Spleen (tissue), 13 donors: ENCODE measurements at regions of chr3 and their contacts with region 1.

Region 1: DNA sequence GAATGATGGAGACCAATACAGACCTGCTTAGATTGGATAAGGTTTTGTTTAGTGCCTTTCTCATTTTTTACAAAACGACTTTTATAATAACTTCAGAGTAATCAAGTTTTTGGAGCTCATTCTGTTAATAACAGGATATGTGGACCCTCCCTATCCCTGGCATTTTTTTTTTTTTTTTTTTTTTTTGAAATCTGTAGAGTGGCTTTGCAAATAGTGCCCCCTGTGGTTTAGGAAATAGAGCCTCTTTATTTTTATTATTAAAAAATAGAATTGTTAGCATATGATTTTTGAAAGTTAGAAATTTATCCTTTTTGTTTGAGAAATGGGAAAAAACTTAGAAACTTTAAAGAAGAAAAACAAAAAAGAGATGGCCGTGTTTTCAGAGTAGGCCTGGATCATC is 11.4 kb downstream of the SKIL start:
- DNase-seq: no peak
- H3K4me3 ChIP-seq: no peak overlapping the region
- H3K27ac ChIP-seq: no peak overlapping the region
- H3K4me1 ChIP-seq: peaks cover 0 to 88% (median 40%) of the 10 kb centered on the region in 6 donors
- H3K27me3 ChIP-seq: no peaks in the 10 kb centered on the region
- CTCF ChIP-seq: peak in 6 of 11 experiments; percentile 27 to 52 (median 32)
- POLR2A ChIP-seq: no peak

Region 2: DNA sequence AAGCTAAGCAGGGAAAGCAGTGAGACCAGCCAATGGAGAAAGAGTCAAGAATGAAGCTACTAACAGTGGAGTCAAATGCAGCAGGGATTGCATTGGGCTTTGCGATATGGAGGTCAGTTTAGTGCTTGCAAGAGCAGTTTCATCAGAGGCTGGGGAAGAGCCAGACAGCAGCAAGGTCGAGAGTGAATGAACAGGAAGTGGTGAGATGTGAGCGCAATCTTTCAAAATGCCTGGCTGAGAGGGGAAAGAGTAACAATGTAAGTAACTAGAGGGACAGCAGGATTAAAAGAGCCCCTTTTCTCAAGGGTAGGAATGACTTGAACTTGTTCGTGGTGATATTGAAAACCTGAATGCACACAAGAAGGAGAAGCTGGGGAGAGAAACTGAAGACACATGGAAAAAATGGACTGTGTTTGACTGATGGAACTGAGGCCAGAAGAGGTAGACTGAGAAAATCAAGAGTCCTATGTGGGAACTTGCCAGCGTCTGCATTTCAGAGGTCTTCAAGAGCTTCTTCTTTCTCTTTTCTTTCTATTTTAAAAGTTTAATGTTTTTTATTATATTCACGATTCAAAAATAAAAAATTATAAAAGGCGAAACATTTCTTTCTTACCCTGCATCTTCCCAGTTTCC is 361.8 kb before region 1 on chr3:
- intact Hi-C with region 1: no loop called
- DNase-seq: peak; percentile 80
- H3K4me3 ChIP-seq: peak overlapping the region in 1 of 8 donors; percentile 21
- H3K27ac ChIP-seq: peak overlapping the region in 7 of 8 donors; percentile 55 to 92 (median 71)
- H3K4me1 ChIP-seq: peaks cover 12 to 62% (median 44%) of the 10 kb centered on the region in 6 donors
- H3K27me3 ChIP-seq: no peaks in the 10 kb centered on the region
- CTCF ChIP-seq: no peak
- POLR2A ChIP-seq: no peak

Region 3: DNA sequence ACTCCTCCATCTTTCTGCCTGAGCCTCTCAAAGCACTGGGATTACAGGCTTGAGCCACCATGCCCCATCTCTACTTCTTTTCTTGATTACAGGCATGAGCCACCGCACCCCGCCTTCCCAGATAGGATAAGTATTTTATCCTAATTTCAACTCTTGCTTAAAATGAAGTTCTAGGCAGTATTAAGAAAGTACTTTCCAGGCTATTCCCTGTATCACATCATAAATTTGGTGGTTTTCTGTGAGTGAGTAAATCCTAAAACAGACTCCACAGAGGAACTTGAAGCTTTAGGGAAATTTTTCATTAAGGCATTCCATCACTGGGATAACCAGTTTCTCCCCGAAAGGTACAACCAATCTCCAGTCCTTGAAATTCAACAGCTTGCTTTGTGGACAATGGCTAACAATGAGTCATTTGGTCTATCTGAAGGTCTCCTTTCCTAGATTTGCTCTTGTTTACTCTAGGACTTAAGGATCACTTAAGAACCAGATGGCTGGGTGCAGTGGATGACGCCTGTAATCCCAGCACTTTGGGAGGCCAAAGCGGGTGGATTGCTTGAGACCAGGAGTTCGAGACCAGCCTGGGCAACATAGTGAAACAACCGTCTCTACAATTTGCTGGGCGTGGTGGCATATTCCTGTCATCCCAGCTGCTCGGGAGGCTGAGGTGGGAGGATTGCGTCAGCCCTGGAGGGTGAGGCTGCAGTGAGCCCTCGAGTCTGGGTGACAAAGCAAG is 61.1 kb before region 1 on chr3:
- intact Hi-C with region 1: loop called (anchors 2 kb)
- DNase-seq: no peak
- H3K4me3 ChIP-seq: no peak overlapping the region
- H3K27ac ChIP-seq: no peak overlapping the region
- H3K4me1 ChIP-seq: peaks cover 0 to 12% (median 3%) of the 10 kb centered on the region in 6 donors
- H3K27me3 ChIP-seq: no peaks in the 10 kb centered on the region
- CTCF ChIP-seq: no peak
- POLR2A ChIP-seq: no peak